ENCODE measurements at regions of chr6 and their contacts with region 1.

Region 1: DNA sequence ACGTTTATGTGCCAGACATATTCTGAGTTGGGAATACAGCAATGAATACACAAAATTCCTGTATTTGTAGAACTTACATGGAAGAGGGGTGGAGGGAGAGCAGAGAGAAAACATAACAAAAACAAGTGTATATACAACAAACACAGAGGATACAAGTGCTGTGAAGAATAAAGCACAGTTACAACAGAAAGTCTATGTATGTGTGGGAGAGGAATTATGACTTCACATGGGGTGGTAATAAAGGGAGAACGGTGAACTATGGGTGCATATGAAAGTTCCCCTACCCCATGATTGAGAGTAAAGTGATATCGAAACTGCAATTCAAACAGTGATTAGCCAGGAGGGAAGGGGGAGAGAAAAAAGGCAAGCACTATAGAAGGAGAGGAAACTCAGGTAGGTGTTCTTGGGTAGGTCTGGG is 24.6 kb downstream of the HBS1L start:
- DNase-seq: peak; percentile 12
- H3K4me3 Mint-ChIP-seq: peak overlapping the region; percentile 44
- H3K27ac Mint-ChIP-seq: peak overlapping the region; percentile 84
- H3K4me1 Mint-ChIP-seq: peaks cover 67% of the 10 kb centered on the region
- H3K27me3 Mint-ChIP-seq: no peaks in the 10 kb centered on the region

Region 2: GRCh38 chr6:135014353-135014832 is 15.7 kb before region 1 on chr6:
- intact Hi-C with region 1: loop called (anchors 1 kb)
- DNase-seq: no peak
- H3K4me3 Mint-ChIP-seq: peak overlapping the region; percentile 54
- H3K27ac Mint-ChIP-seq: peak overlapping the region; percentile 92
- H3K4me1 Mint-ChIP-seq: peaks cover 57% of the 10 kb centered on the region
- H3K27me3 Mint-ChIP-seq: no peaks in the 10 kb centered on the region

Region 3: DNA sequence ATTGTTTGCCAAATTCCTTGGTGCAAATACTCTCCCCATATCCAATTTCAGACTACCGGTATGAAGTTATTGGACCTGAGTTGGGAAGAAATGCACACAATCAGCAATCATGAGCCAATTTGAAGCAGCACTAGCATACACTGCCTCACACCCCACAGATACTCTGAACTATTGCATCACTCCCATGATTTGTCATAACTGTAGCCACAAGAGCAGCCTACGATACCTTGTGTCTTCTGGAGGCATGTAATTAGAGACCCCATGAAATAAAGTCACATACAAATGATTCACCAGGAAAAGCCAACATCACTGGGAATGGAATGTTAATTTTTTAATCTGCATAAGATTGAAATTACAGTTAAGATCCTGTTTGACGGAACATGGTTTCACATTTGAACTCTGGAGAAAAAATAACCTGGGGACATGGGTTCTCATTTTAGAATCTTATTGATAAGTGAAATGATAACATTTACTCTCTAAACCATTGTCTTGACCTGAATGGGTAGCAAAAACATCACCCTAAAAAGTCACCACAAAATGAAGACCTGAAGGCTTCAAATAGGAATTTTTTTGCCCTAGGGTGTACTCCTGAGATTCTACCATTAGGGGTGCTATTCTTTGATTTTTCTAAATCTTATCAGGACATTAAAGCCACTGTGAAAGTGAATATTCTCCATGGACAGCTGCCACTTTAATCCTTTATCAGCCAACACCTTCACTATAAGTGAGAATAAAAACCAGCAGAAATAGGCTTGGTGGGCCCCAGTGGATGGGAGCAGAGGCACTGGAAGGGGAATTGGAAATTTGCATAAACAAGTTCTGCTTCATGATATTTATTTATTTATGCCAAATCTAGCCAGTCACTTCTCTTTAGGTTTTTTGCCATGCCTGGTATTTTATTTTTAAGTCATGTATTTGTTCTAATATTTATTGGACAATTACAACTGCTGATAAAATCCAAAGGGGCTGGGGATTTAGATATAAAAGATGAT is 59.0 kb after region 1 on chr6:
- intact Hi-C with region 1: loop called (anchors 1 kb)
- DNase-seq: peak; percentile 58
- H3K4me3 Mint-ChIP-seq: peak overlapping the region; percentile 57
- H3K27ac Mint-ChIP-seq: peak overlapping the region; percentile 93
- H3K4me1 Mint-ChIP-seq: peaks cover 89% of the 10 kb centered on the region
- H3K27me3 Mint-ChIP-seq: no peaks in the 10 kb centered on the region

Region 4: GRCh38 chr6:135128268-135128914 is 98.3 kb after region 1 on chr6:
- intact Hi-C with region 1: loop called (anchors 1 kb)
- DNase-seq: peak; percentile 53
- H3K4me3 Mint-ChIP-seq: peak overlapping the region; percentile 66
- H3K27ac Mint-ChIP-seq: peak overlapping the region; percentile 97
- H3K4me1 Mint-ChIP-seq: peaks cover 63% of the 10 kb centered on the region
- H3K27me3 Mint-ChIP-seq: no peaks in the 10 kb centered on the region

Region 5: DNA sequence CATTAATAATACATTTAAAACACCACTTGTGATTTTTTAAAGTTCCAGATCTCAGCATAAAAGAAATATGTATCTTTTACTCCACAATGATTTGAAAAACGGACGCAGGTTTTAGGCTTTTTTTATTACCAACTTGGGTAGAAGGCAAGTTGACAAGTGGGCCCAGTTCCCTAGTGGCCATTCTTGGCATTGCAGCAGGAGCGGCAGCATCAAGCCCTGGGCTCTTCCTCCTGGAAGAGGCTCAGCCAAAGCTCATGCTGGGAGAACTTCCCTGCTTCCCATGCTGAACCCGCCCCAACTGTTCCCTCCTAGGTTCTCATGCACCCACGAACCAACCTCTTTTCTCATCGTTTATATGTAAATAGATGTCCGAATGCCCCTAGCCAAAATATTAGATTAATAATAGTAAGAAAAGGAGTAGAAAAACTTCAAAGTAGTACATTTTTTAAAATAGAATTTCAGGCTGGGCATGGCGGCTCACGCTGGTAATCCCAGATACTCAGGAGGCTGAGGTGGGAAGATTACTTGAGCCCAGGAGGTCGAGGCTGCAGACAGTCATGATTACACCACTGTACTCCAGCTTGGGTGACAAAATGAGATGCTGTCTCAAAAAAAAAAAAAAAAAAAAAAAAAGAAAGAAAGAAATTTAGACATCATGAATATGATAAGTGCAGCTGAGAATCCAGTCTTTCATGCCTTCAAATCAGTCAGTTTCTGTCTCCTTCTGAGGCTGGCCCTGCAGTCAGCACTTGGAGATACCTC is 132.8 kb after region 1 on chr6:
- intact Hi-C with region 1: loop called (anchors 1 kb)
- DNase-seq: no peak
- H3K4me3 Mint-ChIP-seq: peak overlapping the region; percentile 53
- H3K27ac Mint-ChIP-seq: peak overlapping the region; percentile 87
- H3K4me1 Mint-ChIP-seq: peaks cover 83% of the 10 kb centered on the region
- H3K27me3 Mint-ChIP-seq: no peaks in the 10 kb centered on the region

Region 6: DNA sequence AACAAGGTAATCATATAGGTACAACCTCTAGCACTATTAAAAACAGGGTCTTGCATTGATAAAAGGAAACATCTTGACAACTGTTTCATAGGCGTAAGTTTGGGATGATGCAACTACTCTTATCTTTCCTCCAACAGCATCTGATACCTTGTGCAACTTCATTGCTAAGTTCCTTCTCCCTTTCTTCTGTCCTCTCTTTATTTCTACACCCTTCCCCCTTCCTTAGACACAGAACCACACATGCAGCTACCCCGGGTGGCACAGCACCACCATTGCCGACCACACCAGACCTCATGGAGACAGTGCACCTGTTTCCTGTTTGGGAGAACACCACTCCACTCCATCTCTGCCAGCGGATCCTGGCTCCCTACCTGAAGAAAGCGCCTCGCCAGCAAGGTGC is 165.5 kb after region 1 on chr6:
- intact Hi-C with region 1: loop called (anchors 2 kb)
- DNase-seq: no peak
- H3K4me3 Mint-ChIP-seq: peak overlapping the region; percentile 45
- H3K27ac Mint-ChIP-seq: peak overlapping the region; percentile 25
- H3K4me1 Mint-ChIP-seq: peaks cover 58% of the 10 kb centered on the region
- H3K27me3 Mint-ChIP-seq: no peaks in the 10 kb centered on the region

Region 7: GRCh38 chr6:135451693-135452092 is 421.6 kb after region 1 on chr6:
- intact Hi-C with region 1: no loop called
- DNase-seq: no peak
- H3K4me3 Mint-ChIP-seq: no peak overlapping the region
- H3K27ac Mint-ChIP-seq: no peak overlapping the region
- H3K4me1 Mint-ChIP-seq: peaks cover 5% of the 10 kb centered on the region
- H3K27me3 Mint-ChIP-seq: no peaks in the 10 kb centered on the region